CD4-positive, alpha-beta memory T cell (primary cell): ENCODE measurements at regions of chrX and their contacts with region 1.

Region 1: GRCh38 chrX:53284684-53285447 is 3.5 kb upstream of the IQSEC2 start:
- DNase-seq: peak in 4 of 5 donors; percentile 37 to 52 (median 42)
- H3K4me3 ChIP-seq: no peak overlapping the region
- H3K4me3 Mint-ChIP-seq: peak overlapping the region in 2 of 8 donors; percentile 15 to 62
- H3K27ac ChIP-seq: no peak overlapping the region
- H3K27ac Mint-ChIP-seq: peak overlapping the region in 2 of 7 donors; percentile 63 to 66
- H3K4me1 ChIP-seq: peaks cover 28% of the 10 kb centered on the region
- H3K4me1 Mint-ChIP-seq: peaks cover 9 to 46% (median 33%) of the 10 kb centered on the region in 4 donors
- H3K27me3 ChIP-seq: no peaks in the 10 kb centered on the region
- H3K27me3 Mint-ChIP-seq: no peaks in the 10 kb centered on the region

Region 2: DNA sequence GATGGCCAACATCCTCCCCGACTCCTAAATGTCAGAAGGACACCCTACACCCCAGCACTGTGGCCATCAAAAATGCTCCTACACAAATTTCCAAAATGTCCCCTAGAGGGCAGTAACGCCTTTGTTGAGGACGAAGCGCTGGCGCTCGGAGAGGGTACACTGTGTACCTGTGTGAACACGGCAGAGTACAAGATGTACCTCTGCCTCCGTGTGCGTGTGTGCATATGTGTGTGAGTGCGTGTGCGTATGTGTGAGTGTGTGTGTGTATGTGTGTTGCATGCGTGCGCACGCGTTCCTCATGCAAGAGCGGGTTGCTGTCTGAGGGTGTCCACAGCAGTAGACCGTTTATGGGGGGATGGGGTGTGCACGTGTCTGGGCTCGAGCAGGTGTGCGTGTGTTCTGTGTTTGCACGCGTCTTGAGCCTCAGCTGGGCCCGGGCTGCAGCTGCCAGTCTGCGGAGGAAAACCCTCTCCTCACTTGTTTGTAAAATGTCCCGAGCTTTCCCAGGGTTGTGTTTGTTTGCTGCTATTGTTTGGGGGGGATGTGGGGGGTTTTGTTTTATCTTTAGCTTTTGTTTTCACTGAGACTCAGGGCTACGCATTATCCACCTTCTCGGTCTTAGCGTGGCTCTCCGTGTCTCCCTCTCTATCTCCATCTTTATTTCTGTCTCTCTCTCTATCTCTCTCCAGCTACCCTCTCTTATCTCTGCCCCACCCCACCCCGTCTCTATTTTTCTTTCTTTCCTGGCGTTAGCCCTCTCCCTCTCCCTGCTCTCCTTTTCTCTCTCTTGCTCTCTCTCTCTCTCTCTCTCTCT is 213.1 kb before region 1 on chrX:
- CTCF ChIA-PET with region 1: no interaction called
- POLR2A ChIA-PET with region 1: no interaction called
- intact Hi-C with region 1: loop called (anchors 10 kb)
- DNase-seq: peak; percentile 79 to 82 (median 81)
- H3K4me3 ChIP-seq: peak overlapping the region in 1 of 2 donors; percentile 52
- H3K4me3 Mint-ChIP-seq: peak overlapping the region; percentile 86 to 92 (median 90)
- H3K27ac ChIP-seq: no peak overlapping the region
- H3K27ac Mint-ChIP-seq: peak overlapping the region; percentile 68 to 95 (median 92)
- H3K4me1 ChIP-seq: peaks cover 9% of the 10 kb centered on the region
- H3K4me1 Mint-ChIP-seq: peaks cover 11 to 23% (median 14%) of the 10 kb centered on the region in 4 donors
- H3K27me3 ChIP-seq: no peaks in the 10 kb centered on the region
- H3K27me3 Mint-ChIP-seq: peaks cover 3% of the 10 kb centered on the region in 2 donors

Region 3: DNA sequence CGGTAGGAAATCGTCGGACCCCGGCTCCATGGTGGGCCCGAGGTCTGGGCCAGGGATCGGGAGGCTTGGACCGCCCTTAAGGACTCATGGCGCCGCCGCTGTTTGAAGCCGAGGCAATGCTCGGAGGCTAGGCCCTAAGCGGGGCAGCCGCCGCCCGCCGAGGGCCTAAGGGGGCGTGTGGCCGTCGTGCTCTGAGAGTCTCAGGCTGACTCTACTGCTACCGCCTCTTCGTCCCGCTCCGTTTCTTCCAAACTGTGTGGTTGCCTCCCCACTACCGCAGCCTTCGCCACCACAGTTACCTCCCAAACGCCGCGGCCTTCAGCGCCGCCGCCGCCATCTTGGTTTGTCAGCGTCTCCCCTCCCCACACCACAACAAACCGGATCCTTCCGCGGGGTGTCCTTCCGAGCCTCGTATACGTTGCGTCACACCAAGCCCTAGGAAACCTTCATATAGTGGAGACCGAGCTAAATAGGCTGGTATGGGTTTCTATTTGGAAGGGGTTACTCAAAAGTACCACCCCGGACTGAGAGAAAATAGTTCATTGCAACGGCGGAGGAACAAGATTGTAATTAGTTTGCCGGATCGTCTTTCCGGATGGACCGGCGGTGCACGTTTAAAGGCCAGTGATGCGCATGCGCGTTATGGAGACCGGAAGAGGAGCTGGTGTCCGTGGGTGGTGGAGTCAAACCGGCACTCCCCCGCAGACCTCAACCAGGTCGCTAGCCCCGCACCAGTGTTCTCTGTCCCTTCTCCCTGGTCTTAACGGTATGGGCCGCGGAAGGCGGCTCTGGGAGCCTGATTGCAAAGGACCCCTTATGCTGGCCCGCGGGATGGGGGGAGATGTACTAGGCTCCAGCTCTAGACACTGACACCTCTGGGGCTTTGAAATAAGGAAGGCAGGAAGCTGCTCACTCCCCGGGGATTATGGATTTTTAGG is 59.7 kb before region 1 on chrX and contains the start of gene KDM5C:
- CTCF ChIA-PET with region 1: no interaction called
- POLR2A ChIA-PET with region 1: interaction called, 10 read pairs
- intact Hi-C with region 1: no loop called
- DNase-seq: peak; percentile 90 to 96 (median 96)
- H3K4me3 ChIP-seq: peak within 1 kb of the TSS; percentile 65 to 88
- H3K4me3 Mint-ChIP-seq: peak within 1 kb of the TSS; percentile 97 to 100 (median 99)
- H3K27ac ChIP-seq: peak within 1 kb of the TSS; percentile 97
- H3K27ac Mint-ChIP-seq: peak within 1 kb of the TSS; percentile 98 to 100 (median 99)
- H3K4me1 ChIP-seq: peaks cover 35% of the 10 kb centered on the region
- H3K4me1 Mint-ChIP-seq: peaks cover 24 to 52% (median 39%) of the 10 kb centered on the region in 4 donors
- H3K27me3 ChIP-seq: no peaks in the 10 kb centered on the region
- H3K27me3 Mint-ChIP-seq: peaks cover 0 to 2% of the 10 kb centered on the region in 2 donors
- total RNA-seq, gene KDM5C: 120 to 127 TPM

Region 4: DNA sequence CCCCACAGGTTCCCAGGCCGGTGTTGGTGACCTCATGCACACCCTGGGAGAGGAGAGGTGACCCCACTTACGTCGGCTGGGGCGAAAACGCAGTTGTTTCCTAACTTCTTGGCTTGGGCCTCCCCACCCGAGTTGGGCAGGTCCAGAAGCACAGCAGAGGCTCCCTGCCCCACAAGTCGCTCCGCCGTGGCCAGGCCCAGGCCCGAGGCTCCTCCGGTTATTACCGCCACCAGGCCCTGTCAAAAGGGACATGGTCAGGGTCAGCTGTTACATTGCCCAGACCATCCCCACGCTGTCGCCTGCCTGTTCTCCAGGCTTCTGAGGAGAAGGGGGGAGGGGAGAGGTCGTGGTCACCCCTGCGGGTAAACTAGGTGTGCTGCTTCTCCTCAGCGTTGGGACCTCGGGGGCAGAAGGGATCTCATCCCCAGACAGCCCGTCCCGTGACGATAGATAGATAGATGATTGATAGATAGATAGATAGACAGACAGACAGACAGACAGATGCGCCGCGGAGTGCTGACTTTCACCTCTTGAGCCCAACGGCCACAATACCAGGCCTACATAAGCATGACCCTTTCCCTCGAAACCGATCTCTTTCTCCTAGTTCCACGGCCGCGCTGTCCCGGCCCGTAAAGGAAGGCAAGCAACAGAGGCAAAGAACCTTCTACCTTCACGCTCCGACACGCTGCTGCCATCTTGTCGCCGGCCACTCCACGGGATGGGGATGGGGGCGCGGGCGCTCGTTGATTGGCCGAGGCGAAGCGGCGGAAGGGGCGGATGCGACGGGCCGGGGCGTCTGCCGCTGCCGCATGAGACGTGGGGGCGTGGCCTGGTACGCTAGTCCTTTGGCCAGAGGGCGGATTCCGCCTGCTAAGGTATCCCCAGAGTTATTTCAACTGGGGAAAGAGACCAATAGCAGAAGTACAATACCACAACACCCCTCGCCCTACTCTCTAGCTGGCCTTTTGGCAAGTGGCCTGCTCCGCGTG is 149.1 kb after region 1 on chrX and contains the start of gene HSD17B10:
- CTCF ChIA-PET with region 1: interaction called, 7 read pairs
- POLR2A ChIA-PET with region 1: no interaction called
- intact Hi-C with region 1: loop called (anchors 1 kb)
- DNase-seq: peak; percentile 81 to 85 (median 85)
- H3K4me3 ChIP-seq: peak within 1 kb of the TSS; percentile 47 to 72
- H3K4me3 Mint-ChIP-seq: peak within 1 kb of the TSS; percentile 88 to 98 (median 94)
- H3K27ac ChIP-seq: peak within 1 kb of the TSS; percentile 75
- H3K27ac Mint-ChIP-seq: peak within 1 kb of the TSS; percentile 88 to 99 (median 95)
- H3K4me1 ChIP-seq: peaks cover 15% of the 10 kb centered on the region
- H3K4me1 Mint-ChIP-seq: peaks cover 7 to 21% (median 14%) of the 10 kb centered on the region in 4 donors
- H3K27me3 ChIP-seq: no peaks in the 10 kb centered on the region
- H3K27me3 Mint-ChIP-seq: peaks cover 0 to 2% of the 10 kb centered on the region in 2 donors
- total RNA-seq, gene HSD17B10: 32.6 to 32.8 TPM

Region 5: DNA sequence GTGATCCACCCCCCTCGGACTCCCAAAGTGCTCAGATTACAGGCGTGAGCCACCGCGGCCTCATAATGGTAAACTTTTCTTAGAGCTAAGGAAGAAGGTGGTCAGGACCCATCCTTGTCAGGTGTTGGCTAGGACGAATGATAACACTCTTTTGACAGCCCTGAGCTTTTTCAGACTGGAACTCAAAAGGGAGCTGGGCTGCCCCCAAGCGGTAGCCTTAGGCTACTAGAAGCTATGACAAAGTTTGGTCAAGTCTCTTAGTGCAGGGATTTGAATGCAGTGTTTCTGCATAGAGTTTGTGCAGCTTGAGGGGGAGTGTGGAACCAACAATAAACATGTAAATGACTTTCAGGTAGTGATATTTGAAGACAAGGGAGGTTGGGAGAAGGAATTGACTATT is 161.1 kb after region 1 on chrX:
- CTCF ChIA-PET with region 1: interaction called, 3 read pairs
- POLR2A ChIA-PET with region 1: no interaction called
- intact Hi-C with region 1: loop called (anchors 1 kb)
- DNase-seq: peak; percentile 27 to 43 (median 36)
- H3K4me3 ChIP-seq: no peak overlapping the region
- H3K4me3 Mint-ChIP-seq: no peak overlapping the region
- H3K27ac ChIP-seq: no peak overlapping the region
- H3K27ac Mint-ChIP-seq: no peak overlapping the region
- H3K4me1 ChIP-seq: no peaks in the 10 kb centered on the region
- H3K4me1 Mint-ChIP-seq: peaks cover 0 to 14% (median 1%) of the 10 kb centered on the region in 4 donors
- H3K27me3 ChIP-seq: no peaks in the 10 kb centered on the region
- H3K27me3 Mint-ChIP-seq: no peaks in the 10 kb centered on the region

Region 6: DNA sequence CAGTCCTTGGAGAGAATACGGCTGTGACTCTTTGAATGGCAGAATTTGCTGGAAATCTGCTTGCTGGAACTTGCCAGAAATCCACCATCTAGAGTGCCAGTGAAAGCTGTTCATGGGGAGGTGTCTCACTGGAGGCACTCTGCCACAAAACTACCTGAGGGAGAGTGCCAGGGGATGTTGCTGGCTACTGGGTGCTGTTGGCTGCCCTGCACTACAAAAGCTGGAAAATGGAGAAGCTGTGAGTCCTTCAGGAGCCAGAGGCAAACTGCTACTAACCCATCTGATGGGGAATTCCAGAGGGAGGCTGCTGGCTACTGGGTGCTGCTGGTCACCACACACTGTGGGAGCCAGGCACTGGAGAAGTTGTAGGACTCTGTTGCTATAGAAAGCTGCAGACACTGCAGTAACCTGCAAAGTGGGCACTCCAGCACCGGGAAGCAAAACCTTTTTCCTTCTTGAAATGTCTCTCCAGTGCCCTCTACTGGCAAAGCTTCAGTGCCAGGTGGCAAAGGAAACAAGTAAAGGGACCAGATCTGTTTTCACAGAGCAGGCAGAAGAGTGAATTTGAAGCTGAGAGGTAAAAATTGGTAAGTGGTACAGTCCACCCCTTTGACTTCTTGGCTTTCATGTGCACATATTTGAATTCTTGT is 197.1 kb after region 1 on chrX:
- CTCF ChIA-PET with region 1: interaction called, 17 read pairs
- POLR2A ChIA-PET with region 1: no interaction called
- intact Hi-C with region 1: no loop called
- DNase-seq: peak; percentile 37 to 51 (median 45)
- H3K4me3 ChIP-seq: no peak overlapping the region
- H3K4me3 Mint-ChIP-seq: no peak overlapping the region
- H3K27ac ChIP-seq: no peak overlapping the region
- H3K27ac Mint-ChIP-seq: no peak overlapping the region
- H3K4me1 ChIP-seq: no peaks in the 10 kb centered on the region
- H3K4me1 Mint-ChIP-seq: peaks cover 0 to 15% (median 0%) of the 10 kb centered on the region in 4 donors
- H3K27me3 ChIP-seq: no peaks in the 10 kb centered on the region
- H3K27me3 Mint-ChIP-seq: peaks cover 2% of the 10 kb centered on the region in 2 donors